Breast epithelium (tissue), 4 donors: ENCODE measurements at regions of chr15 and their contacts with region 1.

Region 1: GRCh38 chr15:95252404-95252803 is 1021.0 kb downstream of the MCTP2 start:
- DNase-seq: no peak
- H3K4me3 ChIP-seq: no peak overlapping the region
- H3K27ac ChIP-seq: no peak overlapping the region
- H3K4me1 ChIP-seq: no peaks in the 10 kb centered on the region
- H3K27me3 ChIP-seq: no peaks in the 10 kb centered on the region
- CTCF ChIP-seq: no peak
- POLR2A ChIP-seq: no peak

Region 2: DNA sequence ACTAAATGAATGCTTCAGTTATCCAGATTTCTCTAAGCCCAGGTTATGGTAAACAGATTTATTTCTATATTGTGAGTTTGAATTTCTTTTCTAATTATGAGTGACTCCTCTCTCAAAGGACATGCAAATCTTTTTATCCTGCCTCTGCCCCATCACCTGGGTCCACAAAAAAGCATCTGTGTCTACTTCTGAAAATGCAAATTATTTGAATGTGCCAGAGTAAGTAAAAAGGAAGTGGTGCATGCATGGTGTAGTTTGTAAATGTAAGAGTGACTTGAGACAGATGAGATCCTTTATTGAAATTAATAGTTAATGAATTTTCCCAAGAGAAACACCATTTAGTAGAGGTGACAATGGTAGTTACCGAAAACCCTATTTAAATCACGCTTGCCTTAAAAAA is 994.2 kb before region 1 on chr15:
- intact Hi-C with region 1: loop called (anchors 5 kb)
- DNase-seq: no peak
- H3K4me3 ChIP-seq: no peak overlapping the region
- H3K27ac ChIP-seq: no peak overlapping the region
- H3K4me1 ChIP-seq: no peaks in the 10 kb centered on the region
- H3K27me3 ChIP-seq: no peaks in the 10 kb centered on the region
- CTCF ChIP-seq: no peak
- POLR2A ChIP-seq: no peak

Region 3: GRCh38 chr15:95032156-95032555 is 220.2 kb before region 1 on chr15:
- intact Hi-C with region 1: no loop called
- DNase-seq: no peak
- H3K4me3 ChIP-seq: no peak overlapping the region
- H3K27ac ChIP-seq: no peak overlapping the region
- H3K4me1 ChIP-seq: no peaks in the 10 kb centered on the region
- H3K27me3 ChIP-seq: no peaks in the 10 kb centered on the region
- CTCF ChIP-seq: no peak
- POLR2A ChIP-seq: no peak

Region 4: GRCh38 chr15:95300958-95301357 is 48.6 kb after region 1 on chr15:
- intact Hi-C with region 1: no loop called
- DNase-seq: no peak
- H3K4me3 ChIP-seq: no peak overlapping the region
- H3K27ac ChIP-seq: no peak overlapping the region
- H3K4me1 ChIP-seq: no peaks in the 10 kb centered on the region
- H3K27me3 ChIP-seq: no peaks in the 10 kb centered on the region
- CTCF ChIP-seq: no peak
- POLR2A ChIP-seq: no peak